Tibial artery (tissue), 4 donors: ENCODE measurements at regions of chr7 and their contacts with region 1.

Region 1: GRCh38 chr7:87219545-87220025 is at the start of gene TMEM243:
- DNase-seq: peak; percentile 77 to 88
- H3K4me3 ChIP-seq: peak within 1 kb of the TSS; percentile 65 to 74
- H3K27ac ChIP-seq: peak within 1 kb of the TSS; percentile 84 to 85
- H3K4me1 ChIP-seq: peaks cover 0 to 30% (median 14%) of the 10 kb centered on the region in 4 donors
- H3K27me3 ChIP-seq: no peaks in the 10 kb centered on the region
- CTCF ChIP-seq: peak in 1 of 2 experiments; percentile 16

Region 2: GRCh38 chr7:87164433-87164832 is 55.2 kb before region 1 on chr7:
- intact Hi-C with region 1: loop called (anchors 10 kb)
- DNase-seq: no peak
- H3K4me3 ChIP-seq: no peak overlapping the region
- H3K27ac ChIP-seq: no peak overlapping the region
- H3K4me1 ChIP-seq: peaks cover 0 to 21% (median 6%) of the 10 kb centered on the region in 4 donors
- H3K27me3 ChIP-seq: no peaks in the 10 kb centered on the region
- CTCF ChIP-seq: no peak

Region 3: DNA sequence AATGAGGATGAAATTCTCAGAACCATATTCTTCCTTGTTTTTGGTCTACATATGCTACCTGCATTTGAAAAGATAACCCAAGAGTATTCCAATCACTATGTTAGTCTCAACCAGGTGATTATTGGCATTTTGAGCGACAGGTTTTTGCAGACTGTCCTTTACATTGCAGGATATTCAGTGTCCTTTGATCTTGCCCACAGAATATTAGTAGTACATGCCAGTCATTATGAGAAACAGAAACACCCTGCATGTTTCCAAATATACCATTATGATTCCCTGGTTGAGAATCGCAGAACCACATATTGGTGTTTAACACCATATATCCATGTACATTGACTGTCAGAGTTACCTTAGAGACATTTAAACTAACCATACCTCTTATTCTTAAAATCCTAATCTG is 30.7 kb before region 1 on chr7:
- intact Hi-C with region 1: loop called (anchors 5 kb)
- DNase-seq: no peak
- H3K4me3 ChIP-seq: no peak overlapping the region
- H3K27ac ChIP-seq: no peak overlapping the region
- H3K4me1 ChIP-seq: no peaks in the 10 kb centered on the region
- H3K27me3 ChIP-seq: no peaks in the 10 kb centered on the region
- CTCF ChIP-seq: no peak

Region 4: DNA sequence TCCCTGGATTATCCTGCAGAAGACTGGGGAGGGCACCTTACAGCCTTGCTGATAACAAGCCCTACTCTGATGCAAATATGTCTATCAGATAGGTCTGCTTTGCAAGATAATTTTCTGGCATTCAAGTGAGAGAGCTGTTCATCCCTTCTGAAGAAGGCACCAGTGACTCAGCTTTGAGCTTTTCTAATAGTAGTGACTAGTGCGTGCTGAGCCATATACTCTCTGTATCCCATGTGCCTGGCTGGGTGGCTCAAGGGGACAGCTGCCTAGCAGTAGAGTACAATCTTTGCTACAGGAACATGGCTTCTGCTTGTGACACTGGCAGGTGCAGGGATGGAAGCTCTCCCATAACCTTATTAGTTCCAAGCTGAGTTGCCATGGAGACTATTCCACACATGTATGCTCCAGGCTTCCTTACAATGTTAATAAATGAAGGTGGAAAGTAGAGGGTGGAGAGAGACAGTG is 290.9 kb after region 1 on chr7:
- intact Hi-C with region 1: no loop called
- DNase-seq: no peak
- H3K4me3 ChIP-seq: no peak overlapping the region
- H3K27ac ChIP-seq: no peak overlapping the region
- H3K4me1 ChIP-seq: no peaks in the 10 kb centered on the region
- H3K27me3 ChIP-seq: no peaks in the 10 kb centered on the region
- CTCF ChIP-seq: no peak